GM13977 (cell line): ENCODE measurements at regions of chr1 and their contacts with region 1.

Region 1: GRCh38 chr1:116485071-116485735 is 85.6 kb downstream of the CD58 start:
- DNase-seq: peak; percentile 82
- CTCF ChIP-seq: peak; percentile 95

Region 2: DNA sequence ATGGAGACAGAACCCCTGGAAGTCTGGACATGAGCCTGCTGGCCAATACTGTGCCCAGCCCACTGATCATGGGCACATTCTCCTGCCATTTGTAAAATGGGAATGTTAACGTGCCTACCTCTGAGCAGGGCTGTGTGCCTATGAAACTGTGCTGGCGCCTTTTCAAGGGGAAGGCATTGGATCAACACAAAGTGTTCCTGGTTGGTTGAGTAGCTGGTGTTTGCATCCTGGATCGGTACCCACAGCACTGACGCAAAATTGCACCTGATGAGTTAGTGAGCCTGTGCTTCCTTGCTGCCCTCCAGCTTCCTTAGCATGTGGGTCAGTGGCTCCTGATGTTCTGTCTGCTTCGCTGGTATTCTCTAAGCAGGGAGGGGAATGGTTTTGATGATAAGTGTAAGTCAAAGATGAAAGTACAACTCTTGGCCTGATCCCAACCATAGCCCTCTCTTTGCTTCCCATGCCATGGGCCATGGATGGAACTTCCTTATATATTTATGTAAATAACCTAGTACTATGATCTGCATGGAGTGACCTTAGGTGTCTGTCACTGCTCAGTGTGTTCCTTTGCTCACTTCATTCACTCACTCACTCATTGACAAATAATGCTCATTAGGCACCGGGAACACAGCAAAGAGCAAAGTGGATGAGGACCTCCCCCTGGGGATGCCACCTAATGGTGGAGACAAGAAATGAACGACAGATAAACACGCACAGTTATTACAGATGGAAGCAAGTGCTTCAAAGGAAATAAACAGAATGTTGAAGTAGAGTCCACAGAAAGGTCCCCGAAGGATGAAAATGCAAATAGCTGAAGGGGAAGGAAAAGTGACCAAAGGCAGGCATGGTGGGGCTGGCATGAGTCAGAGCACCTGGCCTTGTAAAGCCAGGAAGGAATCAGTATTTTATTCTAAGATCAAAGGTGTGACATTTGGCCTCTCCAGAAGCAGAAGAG is 351.2 kb before region 1 on chr1:
- in situ Hi-C with region 1: loop called (anchors 10 kb)
- DNase-seq: no peak
- CTCF ChIP-seq: no peak

Region 3: GRCh38 chr1:116360429-116361173 is 124.6 kb before region 1 on chr1:
- in situ Hi-C with region 1: loop called (anchors 5 kb)
- DNase-seq: no peak
- CTCF ChIP-seq: peak; percentile 39

Region 4: DNA sequence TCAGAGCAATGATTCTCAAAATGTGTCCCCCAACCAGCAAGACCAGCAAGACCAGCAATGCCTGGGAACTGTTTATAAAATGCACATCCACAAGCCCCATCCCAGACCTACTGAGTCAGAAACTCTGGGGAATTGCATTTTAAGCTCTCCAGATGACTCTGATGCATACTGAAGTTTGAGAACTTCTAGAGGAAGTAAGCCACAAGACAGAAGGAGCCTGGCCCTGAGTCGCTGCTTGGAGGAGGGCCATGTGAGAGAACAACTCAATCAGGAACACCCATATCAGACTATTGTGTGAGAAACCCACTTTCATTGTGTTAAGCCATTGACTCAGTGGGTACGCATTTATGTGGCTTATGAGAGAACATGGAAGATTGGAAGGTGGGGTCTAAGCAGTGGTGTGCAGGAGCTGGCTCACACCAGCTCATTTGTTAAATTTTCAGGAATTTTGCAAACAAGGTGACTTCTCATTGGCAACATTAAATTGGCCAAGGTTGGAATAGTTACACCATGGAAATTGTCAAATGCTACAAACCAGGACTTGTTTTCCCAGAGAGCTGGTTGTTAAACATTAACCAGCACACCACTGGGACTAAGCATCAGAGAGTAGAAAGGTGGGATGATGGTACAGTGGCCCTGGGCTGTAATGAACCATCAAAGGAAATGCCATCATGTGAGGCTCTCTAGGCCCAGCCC is 73.3 kb before region 1 on chr1:
- in situ Hi-C with region 1: no loop called
- DNase-seq: no peak
- CTCF ChIP-seq: no peak